ENCODE measurements at regions of chr2 and their contacts with region 1.

Region 1: DNA sequence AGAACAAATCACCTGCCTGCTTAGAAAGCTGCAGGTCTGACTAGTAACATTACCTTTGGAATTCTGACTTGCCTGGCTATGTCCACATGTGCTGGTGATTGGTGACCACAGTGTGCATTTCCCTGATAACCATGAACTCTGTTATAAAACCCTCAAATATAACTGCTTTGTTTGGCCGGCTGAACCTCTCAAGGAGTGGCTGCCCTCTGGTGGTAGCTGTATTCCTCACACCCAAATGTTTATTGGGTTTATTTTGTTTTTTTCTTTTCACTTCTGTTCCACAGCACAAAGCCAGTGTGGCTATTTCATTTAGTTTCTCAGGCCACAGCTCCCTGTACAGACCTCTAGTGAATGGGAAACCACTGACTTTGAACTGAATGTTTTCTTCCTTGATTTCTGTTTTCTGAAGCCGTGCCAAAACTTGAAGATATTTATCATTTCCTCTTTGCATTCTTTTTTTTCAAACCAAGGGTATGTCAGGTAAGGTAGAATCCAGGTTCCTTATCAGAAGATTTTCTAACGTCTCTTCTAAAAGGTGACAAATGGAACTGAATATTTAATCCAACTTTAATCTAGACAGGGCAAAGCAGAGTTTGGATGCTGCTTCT is 549.0 kb upstream of the VRK2 start:
- DNase-seq: peak; percentile 68
- H3K4me3 Mint-ChIP-seq: no peak overlapping the region
- H3K27ac Mint-ChIP-seq: no peak overlapping the region
- H3K4me1 Mint-ChIP-seq: no peaks in the 10 kb centered on the region
- H3K27me3 Mint-ChIP-seq: no peaks in the 10 kb centered on the region
- CTCF ChIP-seq: peak; percentile 82

Region 2: DNA sequence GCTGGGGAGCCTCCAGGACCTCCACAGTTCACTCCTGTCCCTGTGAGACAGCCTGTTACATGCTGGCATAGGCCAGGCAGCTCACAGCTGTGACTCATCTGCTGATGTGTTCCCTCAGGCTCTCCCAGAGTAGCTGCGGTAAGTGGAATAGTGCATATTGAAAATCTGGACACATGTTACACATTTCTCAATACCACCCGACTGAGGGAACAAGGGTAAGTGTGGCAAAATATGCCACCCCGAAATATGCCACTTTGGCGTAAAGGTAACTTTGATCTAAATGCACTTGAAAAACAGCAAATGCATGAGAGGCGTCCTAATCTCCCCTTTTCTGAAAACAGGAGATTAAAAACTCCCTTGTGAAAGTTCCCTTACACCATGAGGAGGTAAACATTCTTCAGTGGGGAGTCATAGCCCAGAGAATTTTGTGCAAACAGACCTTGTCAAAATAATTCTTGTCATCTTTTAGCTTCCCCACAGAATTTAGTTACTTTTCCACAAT is 755.9 kb before region 1 on chr2:
- CTCF ChIA-PET with region 1: interaction called, 4 read pairs
- POLR2A ChIA-PET with region 1: no interaction called
- intact Hi-C with region 1: loop called (anchors 5 kb)
- DNase-seq: peak; percentile 95
- H3K4me3 Mint-ChIP-seq: peak overlapping the region; percentile 63
- H3K27ac Mint-ChIP-seq: peak overlapping the region; percentile 96
- H3K4me1 Mint-ChIP-seq: peaks cover 28% of the 10 kb centered on the region
- H3K27me3 Mint-ChIP-seq: no peaks in the 10 kb centered on the region
- CTCF ChIP-seq: no peak

Region 3: GRCh38 chr2:56985609-56986008 is 512.0 kb before region 1 on chr2:
- CTCF ChIA-PET with region 1: interaction called, 4 read pairs
- POLR2A ChIA-PET with region 1: no interaction called
- intact Hi-C with region 1: loop called (anchors 5 kb)
- DNase-seq: peak; percentile 4
- H3K4me3 Mint-ChIP-seq: no peak overlapping the region
- H3K27ac Mint-ChIP-seq: no peak overlapping the region
- H3K4me1 Mint-ChIP-seq: no peaks in the 10 kb centered on the region
- H3K27me3 Mint-ChIP-seq: no peaks in the 10 kb centered on the region
- CTCF ChIP-seq: no peak

Region 4: GRCh38 chr2:57386305-57386704 is 111.3 kb before region 1 on chr2:
- CTCF ChIA-PET with region 1: interaction called, 10 read pairs
- POLR2A ChIA-PET with region 1: no interaction called
- intact Hi-C with region 1: no loop called
- DNase-seq: no peak
- H3K4me3 Mint-ChIP-seq: no peak overlapping the region
- H3K27ac Mint-ChIP-seq: no peak overlapping the region
- H3K4me1 Mint-ChIP-seq: no peaks in the 10 kb centered on the region
- H3K27me3 Mint-ChIP-seq: no peaks in the 10 kb centered on the region
- CTCF ChIP-seq: no peak

Region 5: DNA sequence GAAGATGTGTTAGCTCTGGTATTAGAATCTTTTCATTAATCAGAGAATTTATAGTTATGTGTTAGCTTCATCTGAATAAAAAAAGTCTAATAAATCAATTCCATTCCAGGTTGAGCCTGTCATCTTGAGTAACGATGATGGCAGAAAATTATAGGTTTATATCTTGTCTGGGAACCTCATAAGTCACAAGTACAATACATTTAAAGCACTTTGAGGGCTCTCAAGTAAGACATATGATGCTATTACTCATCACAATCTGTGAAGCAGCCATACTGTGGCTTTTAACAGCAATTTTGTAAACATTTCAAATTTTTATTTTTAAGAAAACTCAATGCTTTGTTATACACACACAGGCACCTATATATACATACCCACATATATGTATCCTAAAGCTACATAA is 64.9 kb after region 1 on chr2:
- CTCF ChIA-PET with region 1: no interaction called
- POLR2A ChIA-PET with region 1: no interaction called
- intact Hi-C with region 1: no loop called
- DNase-seq: no peak
- H3K4me3 Mint-ChIP-seq: no peak overlapping the region
- H3K27ac Mint-ChIP-seq: no peak overlapping the region
- H3K4me1 Mint-ChIP-seq: no peaks in the 10 kb centered on the region
- H3K27me3 Mint-ChIP-seq: no peaks in the 10 kb centered on the region
- CTCF ChIP-seq: no peak

Region 6: DNA sequence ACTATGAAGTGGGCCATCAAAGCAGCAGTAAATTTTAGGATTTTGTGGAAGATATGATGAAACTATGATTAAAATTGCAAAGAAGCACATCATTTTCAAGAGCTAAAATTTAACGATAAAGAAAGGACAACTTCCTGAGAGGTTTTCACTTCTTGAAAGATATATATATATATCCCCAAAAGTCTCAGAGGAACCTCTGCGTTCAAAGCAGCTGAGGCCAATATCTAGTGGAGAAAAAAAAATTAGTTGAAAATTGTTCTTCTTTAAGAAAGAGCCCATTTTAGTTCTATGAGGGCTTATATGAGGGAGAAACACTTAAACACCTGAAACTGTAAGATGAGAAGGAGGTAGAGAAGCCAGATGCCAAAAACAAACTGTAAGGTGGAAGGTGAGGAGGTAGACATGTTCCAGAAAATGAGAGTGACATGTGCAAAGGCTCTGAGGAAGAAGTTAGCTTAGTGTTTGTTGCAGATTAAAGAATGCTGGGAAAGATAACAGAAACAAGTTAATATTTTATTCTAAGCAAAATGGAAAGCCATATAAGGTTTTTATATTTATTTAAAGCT is 476.1 kb after region 1 on chr2:
- CTCF ChIA-PET with region 1: no interaction called
- POLR2A ChIA-PET with region 1: no interaction called
- intact Hi-C with region 1: no loop called
- DNase-seq: no peak
- H3K4me3 Mint-ChIP-seq: no peak overlapping the region
- H3K27ac Mint-ChIP-seq: no peak overlapping the region
- H3K4me1 Mint-ChIP-seq: no peaks in the 10 kb centered on the region
- H3K27me3 Mint-ChIP-seq: no peaks in the 10 kb centered on the region
- CTCF ChIP-seq: no peak